ENCODE measurements at regions of chr1 and their contacts with region 1.

Region 1: DNA sequence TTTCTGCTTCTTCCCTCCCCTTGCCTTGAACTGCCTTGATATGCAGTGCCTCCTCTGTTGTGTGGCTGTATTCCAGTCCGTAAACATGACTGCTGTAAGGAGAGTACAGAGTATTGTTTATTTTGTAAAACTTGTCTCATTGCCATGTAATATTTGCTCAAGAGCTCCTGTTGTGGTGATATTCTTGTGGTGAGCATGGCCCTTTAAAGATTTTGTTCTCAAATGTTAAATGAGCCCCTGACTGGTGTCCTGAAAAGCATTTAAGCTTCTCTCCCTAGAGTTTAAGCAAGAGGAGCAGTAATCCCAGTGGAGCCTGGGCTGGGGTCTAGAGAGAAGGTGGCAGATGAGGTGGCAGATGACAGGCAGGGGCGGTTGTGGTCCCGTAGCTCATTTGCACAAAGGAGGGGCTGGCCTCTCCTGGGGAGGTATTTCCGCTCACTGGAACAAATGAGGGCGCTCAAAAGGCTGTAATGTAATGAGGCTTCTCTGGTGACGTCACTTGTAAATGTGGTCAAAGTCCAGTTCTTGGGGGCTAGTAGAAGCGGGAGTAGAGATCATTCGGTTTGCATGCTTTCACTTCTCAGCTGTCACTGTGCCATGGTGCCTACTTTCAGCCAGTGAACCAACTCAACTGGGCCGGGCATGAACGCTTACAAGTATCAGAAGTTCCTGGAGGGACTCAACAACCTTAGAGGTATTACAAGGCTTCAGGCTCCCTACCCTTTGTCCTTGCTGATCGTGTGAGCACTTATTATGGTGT is 46.0 kb upstream of the MACF1 start:
- DNase-seq: peak; percentile 37
- ATAC-seq: peak; percentile 88
- H3K4me3 ChIP-seq: no peak overlapping the region
- H3K27ac ChIP-seq: no peak overlapping the region
- H3K4me1 ChIP-seq: peaks cover 2% of the 10 kb centered on the region; the same call in 1 of the 2 replicates
- H3K27me3 ChIP-seq: no peaks in the 10 kb centered on the region
- CTCF ChIP-seq: no peak
- EP300 ChIP-seq: no peak
- POLR2A ChIP-seq: no peak
- RAD21 ChIP-seq: no peak

Region 2: DNA sequence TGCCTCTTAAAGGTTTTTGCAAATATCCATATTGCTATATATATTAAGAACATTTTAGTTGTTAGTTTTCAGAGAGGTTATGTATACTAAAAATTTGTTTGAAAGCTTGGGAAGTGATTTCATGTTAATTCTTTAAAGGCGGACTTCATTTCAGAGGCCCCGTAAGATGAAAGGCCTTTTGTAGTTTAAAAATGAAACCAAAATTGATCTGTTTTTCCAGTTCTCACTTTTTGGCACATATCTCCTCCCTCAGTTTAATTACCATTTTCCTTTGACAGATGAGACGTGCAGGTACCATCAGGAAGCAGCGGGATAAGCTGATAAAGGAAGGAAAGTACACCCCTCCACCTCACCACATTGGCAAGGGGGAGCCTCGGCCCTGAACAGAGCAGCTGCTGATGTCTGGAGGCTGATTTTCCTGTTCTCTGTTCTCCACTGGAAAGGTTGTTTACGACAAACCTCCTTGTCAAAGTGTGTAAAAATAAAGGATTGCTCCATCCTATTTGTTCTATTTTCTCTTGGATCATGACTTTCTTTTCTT is 124.3 kb before region 1 on chr1:
- CTCF ChIA-PET with region 1: no interaction called
- POLR2A ChIA-PET with region 1: no interaction called
- RAD21 ChIA-PET with region 1: no interaction called
- SMC1A ChIA-PET with region 1: no interaction called
- in situ Hi-C with region 1: no loop called
- intact Hi-C with region 1: no loop called
- DNase-seq: no peak
- ATAC-seq: no peak
- H3K4me3 ChIP-seq: no peak overlapping the region
- H3K27ac ChIP-seq: no peak overlapping the region
- H3K4me1 ChIP-seq: peaks cover 8% of the 10 kb centered on the region
- H3K27me3 ChIP-seq: no peaks in the 10 kb centered on the region
- CTCF ChIP-seq: no peak
- EP300 ChIP-seq: no peak
- POLR2A ChIP-seq: no peak
- RAD21 ChIP-seq: no peak

Region 3: DNA sequence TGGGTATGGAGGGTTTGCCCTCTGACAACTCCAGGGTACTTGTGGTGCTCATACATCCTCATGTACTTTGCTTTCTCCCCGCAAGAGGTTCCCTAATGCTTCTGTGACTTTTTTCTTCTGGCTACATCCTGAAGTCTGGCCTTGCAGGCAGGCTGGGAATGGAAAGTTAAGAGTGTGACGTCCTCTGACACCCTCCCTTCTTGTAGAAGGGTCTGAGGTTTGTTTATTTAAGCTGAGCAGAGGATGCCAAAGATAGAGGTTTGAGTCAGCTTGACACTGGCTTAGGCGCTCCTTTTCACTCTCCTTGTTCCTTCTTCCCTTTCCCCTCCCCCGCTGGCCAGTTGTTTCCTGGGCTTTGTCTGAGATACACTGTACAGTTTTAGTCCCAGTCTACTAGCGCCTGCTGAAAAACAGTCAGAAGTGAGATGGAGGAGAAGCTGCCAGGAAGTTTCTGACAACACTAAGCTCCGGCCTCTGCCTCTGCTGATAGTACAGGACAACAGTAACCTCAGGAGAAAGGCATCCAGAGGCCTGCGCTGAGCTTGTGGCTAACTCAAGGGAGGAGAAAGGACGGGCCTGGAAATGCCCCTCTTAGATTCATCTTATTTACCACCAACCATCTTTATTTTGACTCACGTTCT is 46.1 kb after region 1 on chr1 and contains the start of gene MACF1:
- CTCF ChIA-PET with region 1: no interaction called
- POLR2A ChIA-PET with region 1: no interaction called
- RAD21 ChIA-PET with region 1: no interaction called
- SMC1A ChIA-PET with region 1: interaction called, 10 read pairs
- in situ Hi-C with region 1: no loop called
- intact Hi-C with region 1: no loop called
- DNase-seq: no peak
- ATAC-seq: peak; percentile 70
- H3K4me3 ChIP-seq: peak within 1 kb of the TSS; percentile 67
- H3K27ac ChIP-seq: peak within 1 kb of the TSS; percentile 83
- H3K4me1 ChIP-seq: peaks cover 12% of the 10 kb centered on the region
- H3K27me3 ChIP-seq: no peaks in the 10 kb centered on the region
- CTCF ChIP-seq: no peak; a peak in 1 of 6 replicates
- EP300 ChIP-seq: no peak
- POLR2A ChIP-seq: no peak
- RAD21 ChIP-seq: 0 out of 2 replicates have a peak, but pooled peaks have one; percentile 15
- polyA plus RNA-seq, gene MACF1: 15.5 to 25.1 TPM

Measured in GM12878 (cell line).